Endothelial cell of umbilical vein (primary cell): ENCODE measurements at regions of chr2 and their contacts with region 1.

Region 1: DNA sequence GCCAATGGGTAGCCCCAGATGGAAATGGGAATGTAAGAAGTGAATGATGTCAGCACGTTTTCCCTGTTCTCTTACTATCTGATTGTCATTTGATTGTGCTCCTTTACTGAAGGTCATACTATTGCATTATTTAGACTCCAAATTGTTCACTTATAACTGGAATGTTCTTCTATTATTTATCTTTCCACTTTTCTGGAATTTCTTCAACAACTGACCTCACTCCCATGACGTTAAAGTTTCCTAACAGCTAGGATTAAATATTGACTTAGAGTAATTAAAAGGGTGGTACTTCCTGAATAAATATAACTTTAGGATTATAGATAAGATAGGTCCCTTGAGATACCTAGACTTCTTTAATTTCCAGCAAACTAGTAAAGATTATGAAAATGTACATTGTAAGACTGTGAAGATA is 10.9 kb upstream of the GULP1 start:
- DNase-seq: peak; percentile 31
- H3K4me3 ChIP-seq: no peak overlapping the region
- H3K27ac ChIP-seq: no peak overlapping the region
- H3K4me1 ChIP-seq: no peaks in the 10 kb centered on the region
- H3K27me3 ChIP-seq: no peaks in the 10 kb centered on the region
- CTCF ChIP-seq: no peak
- POLR2A ChIP-seq: no peak

Region 2: DNA sequence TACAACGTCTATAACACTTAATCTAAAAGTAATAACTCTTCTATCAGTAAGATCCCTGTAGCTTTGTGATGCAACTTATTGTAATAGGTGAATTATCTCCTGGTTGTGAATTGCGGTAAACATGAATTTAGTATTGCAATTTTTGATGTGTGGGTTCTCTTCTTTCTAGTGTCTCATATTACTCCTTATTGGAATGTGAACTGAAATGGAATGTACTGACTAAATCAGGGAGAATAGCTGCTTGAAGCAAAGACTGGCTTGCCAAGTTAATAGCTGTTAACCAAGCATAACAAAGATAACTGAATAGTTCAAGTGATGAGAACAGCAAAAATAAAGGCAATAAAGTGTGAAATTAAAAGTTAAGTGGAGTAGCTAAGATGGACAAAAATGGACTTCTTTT is 666.1 kb before region 1 on chr2:
- CTCF ChIA-PET with region 1: no interaction called
- POLR2A ChIA-PET with region 1: no interaction called
- dilution Hi-C with region 1: no loop called
- intact Hi-C with region 1: loop called (anchors 10 kb)
- DNase-seq: no peak
- H3K4me3 ChIP-seq: no peak overlapping the region
- H3K27ac ChIP-seq: no peak overlapping the region
- H3K4me1 ChIP-seq: no peaks in the 10 kb centered on the region
- H3K27me3 ChIP-seq: no peaks in the 10 kb centered on the region
- CTCF ChIP-seq: no peak
- POLR2A ChIP-seq: no peak